Naive thymus-derived CD4-positive, alpha-beta T cell (primary cell): ENCODE measurements at regions of chrX and their contacts with region 1.

Region 1: DNA sequence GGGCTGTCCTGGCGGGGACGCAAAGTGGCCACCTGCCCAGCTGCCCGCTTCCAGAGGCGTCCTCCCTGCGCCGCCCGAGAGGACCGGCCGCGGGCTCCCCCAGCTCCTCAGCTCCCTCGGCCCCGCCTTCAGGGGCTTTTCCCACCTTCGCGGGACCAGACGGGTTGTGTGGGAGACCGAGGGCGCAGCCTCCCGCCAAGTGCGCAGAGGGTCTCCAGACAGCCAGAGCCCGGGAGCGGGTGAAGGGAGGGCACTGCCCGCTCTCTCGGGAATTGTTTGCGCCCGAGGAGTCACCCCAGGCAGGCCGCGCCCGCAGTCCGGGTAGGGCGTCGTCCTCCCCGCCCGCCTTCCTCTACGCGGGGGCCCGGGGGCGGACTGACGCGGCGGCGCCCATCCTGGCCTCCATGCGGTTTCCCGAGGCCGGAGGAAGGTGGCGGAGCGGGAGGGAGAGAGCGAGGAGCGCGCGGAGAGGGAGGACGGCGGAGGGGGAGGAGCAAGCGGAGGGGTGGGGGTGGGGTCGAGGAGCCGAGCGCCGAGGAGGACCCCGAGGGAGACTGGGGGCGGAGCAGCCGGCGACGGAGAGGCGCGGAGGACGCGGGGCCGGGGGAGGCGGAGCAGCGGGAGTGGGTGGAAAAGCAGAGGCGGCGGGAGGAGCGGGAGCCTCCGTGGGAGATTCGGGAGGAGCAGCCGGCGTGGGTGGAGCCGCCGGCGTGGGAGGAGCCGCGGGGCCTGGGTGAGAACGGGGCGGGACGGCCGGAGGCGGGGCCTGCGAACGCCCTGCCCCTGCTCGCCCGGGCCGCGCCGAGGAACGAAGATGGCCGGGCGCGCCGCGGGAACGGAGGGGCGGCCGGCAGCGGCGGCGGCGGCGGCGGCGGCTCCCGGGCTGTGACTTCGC is 47.6 kb downstream of the CLDN34 start:
- DNase-seq: peak; percentile 62 to 84 (median 78)
- ATAC-seq: peak; percentile 97
- H3K4me3 ChIP-seq: peak overlapping the region; percentile 37
- H3K4me3 Mint-ChIP-seq: peak overlapping the region; percentile 50 to 89 (median 64)
- H3K27ac ChIP-seq: peak overlapping the region; percentile 64
- H3K27ac Mint-ChIP-seq: peak overlapping the region in 4 of 9 donors; percentile 45 to 75 (median 58)
- H3K4me1 ChIP-seq: peaks cover 7 to 13% of the 10 kb centered on the region in 2 donors
- H3K4me1 Mint-ChIP-seq: peaks cover 17 to 51% (median 43%) of the 10 kb centered on the region in 7 donors
- H3K27me3 ChIP-seq: no peaks in the 10 kb centered on the region
- H3K27me3 Mint-ChIP-seq: peaks cover 0 to 4% (median 0%) of the 10 kb centered on the region in 5 donors

Region 2: GRCh38 chrX:8125566-8125965 is 1889.1 kb before region 1 on chrX:
- CTCF ChIA-PET with region 1: no interaction called
- POLR2A ChIA-PET with region 1: no interaction called
- intact Hi-C with region 1: no loop called
- DNase-seq: no peak
- ATAC-seq: no peak
- H3K4me3 ChIP-seq: no peak overlapping the region
- H3K4me3 Mint-ChIP-seq: no peak overlapping the region
- H3K27ac ChIP-seq: no peak overlapping the region
- H3K27ac Mint-ChIP-seq: no peak overlapping the region
- H3K4me1 ChIP-seq: no peaks in the 10 kb centered on the region
- H3K4me1 Mint-ChIP-seq: peaks cover 0 to 4% (median 0%) of the 10 kb centered on the region in 7 donors
- H3K27me3 ChIP-seq: no peaks in the 10 kb centered on the region
- H3K27me3 Mint-ChIP-seq: no peaks in the 10 kb centered on the region

Region 3: GRCh38 chrX:9955506-9955905 is 59.2 kb before region 1 on chrX:
- CTCF ChIA-PET with region 1: no interaction called
- POLR2A ChIA-PET with region 1: no interaction called
- intact Hi-C with region 1: no loop called
- DNase-seq: no peak
- ATAC-seq: no peak
- H3K4me3 ChIP-seq: no peak overlapping the region
- H3K4me3 Mint-ChIP-seq: no peak overlapping the region
- H3K27ac ChIP-seq: no peak overlapping the region
- H3K27ac Mint-ChIP-seq: no peak overlapping the region
- H3K4me1 ChIP-seq: no peaks in the 10 kb centered on the region
- H3K4me1 Mint-ChIP-seq: no peaks in the 10 kb centered on the region
- H3K27me3 ChIP-seq: no peaks in the 10 kb centered on the region
- H3K27me3 Mint-ChIP-seq: peaks cover 6 to 14% (median 10%) of the 10 kb centered on the region in 5 donors

Region 4: DNA sequence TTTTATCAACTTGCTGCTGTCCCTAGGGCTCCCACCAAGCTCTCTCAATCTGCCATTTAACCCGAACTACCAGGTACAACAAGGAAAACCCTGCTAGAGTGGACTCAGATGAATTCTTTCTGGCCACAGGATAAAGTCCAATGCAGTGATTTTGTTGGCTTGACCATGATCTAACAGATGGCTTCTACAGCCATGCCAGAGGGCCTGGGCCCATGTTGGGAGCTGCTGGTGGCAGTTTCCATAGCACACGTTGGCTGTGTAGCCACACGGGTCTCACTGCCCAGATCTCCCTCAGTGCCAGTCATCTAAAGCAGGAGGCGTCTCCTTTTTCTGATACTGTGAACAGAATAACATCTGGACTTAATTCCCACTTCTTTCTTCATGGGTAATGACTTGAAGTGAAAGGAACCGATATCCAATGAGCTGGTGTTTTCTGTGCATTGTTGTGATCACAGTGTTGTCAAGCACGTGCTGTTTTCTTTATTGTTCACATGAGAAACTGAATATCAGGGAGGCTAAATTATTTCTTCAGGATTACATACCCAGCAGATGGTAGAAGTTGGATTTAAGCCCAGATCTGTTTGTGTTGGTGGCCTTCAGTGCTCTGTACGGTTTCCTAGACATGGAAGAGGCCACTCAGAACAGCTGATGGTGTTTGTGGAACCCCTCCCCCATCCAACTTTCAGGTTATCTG is 56.9 kb after region 1 on chrX:
- CTCF ChIA-PET with region 1: interaction called, 3 read pairs
- POLR2A ChIA-PET with region 1: no interaction called
- intact Hi-C with region 1: loop called in 1 of 2 experiments (anchors 2 kb)
- DNase-seq: no peak
- ATAC-seq: no peak
- H3K4me3 ChIP-seq: no peak overlapping the region
- H3K4me3 Mint-ChIP-seq: peak overlapping the region in 4 of 10 donors; percentile 41 to 55 (median 48)
- H3K27ac ChIP-seq: no peak overlapping the region
- H3K27ac Mint-ChIP-seq: peak overlapping the region in 5 of 9 donors; percentile 31 to 67 (median 54)
- H3K4me1 ChIP-seq: peaks cover 0 to 17% of the 10 kb centered on the region in 2 donors
- H3K4me1 Mint-ChIP-seq: peaks cover 4 to 23% (median 16%) of the 10 kb centered on the region in 7 donors
- H3K27me3 ChIP-seq: no peaks in the 10 kb centered on the region
- H3K27me3 Mint-ChIP-seq: no peaks in the 10 kb centered on the region

Region 5: GRCh38 chrX:11111038-11111851 is 1096.5 kb after region 1 on chrX and contains the start of gene HCCS:
- CTCF ChIA-PET with region 1: no interaction called
- POLR2A ChIA-PET with region 1: no interaction called
- intact Hi-C with region 1: loop called in 1 of 2 experiments (anchors 1 kb)
- DNase-seq: peak; percentile 59 to 86 (median 81)
- ATAC-seq: peak; percentile 94
- H3K4me3 ChIP-seq: peak within 1 kb of the TSS; percentile 73
- H3K4me3 Mint-ChIP-seq: peak within 1 kb of the TSS in 4 of 10 donors; percentile 95 to 98 (median 96)
- H3K27ac ChIP-seq: peak within 1 kb of the TSS; percentile 87
- H3K27ac Mint-ChIP-seq: peak within 1 kb of the TSS in 7 of 9 donors; percentile 90 to 99 (median 96)
- H3K4me1 ChIP-seq: no peaks in the 10 kb centered on the region
- H3K4me1 Mint-ChIP-seq: peaks cover 7 to 33% (median 24%) of the 10 kb centered on the region in 7 donors
- H3K27me3 ChIP-seq: no peaks in the 10 kb centered on the region
- H3K27me3 Mint-ChIP-seq: no peaks in the 10 kb centered on the region
- total RNA-seq, gene HCCS: 5.6 to 19.9 (median 13.3) TPM